ENCODE measurements at regions of chr13 and their contacts with region 1.

Region 1: DNA sequence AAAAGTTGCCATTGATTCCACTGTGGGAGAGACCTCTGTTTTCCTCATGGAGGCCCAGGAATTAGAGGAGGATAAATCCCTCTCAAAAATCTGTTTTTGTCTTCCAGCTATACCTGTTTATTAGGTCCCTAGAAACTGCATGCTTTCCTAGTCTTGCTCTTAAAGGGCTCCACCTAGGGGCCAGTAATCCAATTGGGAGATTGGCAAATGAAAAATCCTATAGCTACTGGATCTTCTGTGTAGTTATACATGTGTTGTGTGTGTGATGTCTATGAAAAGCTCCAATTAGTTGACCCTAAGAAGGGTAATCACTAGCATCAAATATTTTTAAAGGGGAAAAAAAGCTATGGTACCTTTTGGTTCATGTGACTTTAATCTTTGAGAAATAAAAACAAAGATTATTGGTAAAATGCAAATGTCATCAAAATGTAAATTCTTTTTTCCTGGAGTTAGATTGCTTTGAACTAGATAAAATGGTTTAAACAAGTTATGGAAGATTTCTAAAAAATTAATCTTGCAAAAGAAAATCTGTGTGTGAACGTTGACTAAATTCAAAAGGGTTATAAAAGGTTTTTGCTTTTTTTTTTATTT is 63.4 kb upstream of the C1QTNF9B start:
- DNase-seq: peak; percentile 75
- H3K4me3 Mint-ChIP-seq: no peak overlapping the region
- H3K27ac Mint-ChIP-seq: no peak overlapping the region
- H3K4me1 Mint-ChIP-seq: peaks cover 38% of the 10 kb centered on the region
- H3K27me3 Mint-ChIP-seq: peaks cover 5% of the 10 kb centered on the region

Region 2: GRCh38 chr13:23752111-23753001 is 208.3 kb before region 1 on chr13:
- intact Hi-C with region 1: loop called (anchors 5 kb)
- DNase-seq: no peak
- H3K4me3 Mint-ChIP-seq: no peak overlapping the region
- H3K27ac Mint-ChIP-seq: peak overlapping the region; percentile 46
- H3K4me1 Mint-ChIP-seq: peaks cover 30% of the 10 kb centered on the region
- H3K27me3 Mint-ChIP-seq: peaks cover 2% of the 10 kb centered on the region

Region 3: GRCh38 chr13:23794267-23795161 is 166.1 kb before region 1 on chr13:
- intact Hi-C with region 1: no loop called
- DNase-seq: no peak
- H3K4me3 Mint-ChIP-seq: no peak overlapping the region
- H3K27ac Mint-ChIP-seq: no peak overlapping the region
- H3K4me1 Mint-ChIP-seq: peaks cover 6% of the 10 kb centered on the region
- H3K27me3 Mint-ChIP-seq: no peaks in the 10 kb centered on the region

Region 4: GRCh38 chr13:23899555-23899954 is 61.1 kb before region 1 on chr13:
- intact Hi-C with region 1: no loop called
- DNase-seq: peak; percentile 83
- H3K4me3 Mint-ChIP-seq: no peak overlapping the region
- H3K27ac Mint-ChIP-seq: no peak overlapping the region
- H3K4me1 Mint-ChIP-seq: peaks cover 6% of the 10 kb centered on the region
- H3K27me3 Mint-ChIP-seq: peaks cover 38% of the 10 kb centered on the region

Region 5: DNA sequence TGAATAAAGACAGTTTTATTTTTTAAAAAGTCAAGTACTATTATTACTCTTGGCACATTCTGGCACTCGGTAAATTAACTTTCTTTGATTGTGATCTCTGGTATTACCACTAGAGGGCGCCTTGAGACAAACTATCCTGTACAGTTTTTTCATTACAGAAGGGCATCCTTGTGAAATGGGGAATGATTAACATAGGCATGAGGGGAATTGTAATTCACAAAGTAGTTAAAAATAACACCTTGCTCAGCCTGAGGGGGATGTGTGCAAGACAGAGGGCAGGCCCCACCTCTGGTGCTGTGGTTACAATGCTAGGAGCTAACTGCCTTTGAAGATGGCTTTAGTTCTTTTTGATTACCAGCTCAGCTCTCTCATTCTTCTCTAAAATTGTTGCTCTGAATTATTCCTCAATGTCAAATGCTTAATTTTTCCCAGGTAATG is 39.2 kb before region 1 on chr13:
- intact Hi-C with region 1: loop called (anchors 1 kb)
- DNase-seq: peak; percentile 79
- H3K4me3 Mint-ChIP-seq: no peak overlapping the region
- H3K27ac Mint-ChIP-seq: no peak overlapping the region
- H3K4me1 Mint-ChIP-seq: peaks cover 2% of the 10 kb centered on the region
- H3K27me3 Mint-ChIP-seq: peaks cover 56% of the 10 kb centered on the region

Region 6: GRCh38 chr13:24033527-24034302 is 73.1 kb after region 1 on chr13:
- intact Hi-C with region 1: no loop called
- DNase-seq: no peak
- H3K4me3 Mint-ChIP-seq: no peak overlapping the region
- H3K27ac Mint-ChIP-seq: no peak overlapping the region
- H3K4me1 Mint-ChIP-seq: peaks cover 6% of the 10 kb centered on the region
- H3K27me3 Mint-ChIP-seq: peaks cover 26% of the 10 kb centered on the region